Aorta (tissue), 5 donors: ENCODE measurements at regions of chrX and their contacts with region 1.

Region 1: DNA sequence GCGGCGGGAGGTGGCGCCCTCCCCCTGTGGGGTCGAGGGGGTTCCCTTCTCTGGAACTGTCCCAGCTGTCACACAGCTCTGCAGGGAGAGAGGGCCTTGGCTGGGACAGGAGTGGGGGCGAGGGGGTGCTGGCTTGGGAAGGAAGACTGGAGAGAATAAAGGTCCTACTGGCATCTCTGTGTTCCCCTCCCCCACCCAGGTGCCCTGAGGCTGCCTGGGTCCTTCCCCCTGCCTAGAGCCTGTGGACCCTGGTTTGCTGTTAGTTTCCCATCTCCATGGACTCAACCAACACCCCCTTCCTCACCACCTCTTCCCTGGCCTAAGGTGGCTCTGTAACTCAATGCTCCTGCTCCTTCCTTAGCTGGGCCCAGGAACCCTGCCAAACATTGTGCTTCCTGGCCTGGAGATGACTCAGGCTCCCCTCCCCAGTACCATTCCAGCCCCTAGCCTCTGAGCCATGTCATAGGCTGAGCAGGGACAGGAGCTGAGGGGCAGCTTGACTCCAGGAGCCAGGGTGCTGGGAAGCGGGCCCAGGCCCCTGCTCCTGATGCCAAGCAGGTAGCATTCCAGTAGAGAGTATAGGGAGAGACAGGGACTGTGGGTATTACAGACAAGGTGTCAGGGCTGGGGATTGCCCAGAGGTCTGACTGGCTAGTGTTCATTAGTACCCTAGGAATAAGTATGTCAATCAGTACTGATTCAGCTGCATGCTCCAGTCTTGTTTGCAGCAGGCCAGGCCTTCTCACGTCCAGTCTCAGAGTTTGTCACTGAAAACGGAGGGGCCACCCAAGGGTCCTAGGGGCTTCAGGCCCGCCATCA is 100.7 kb downstream of the EFNB1 start:
- DNase-seq: peak in 1 of 2 donors; percentile 62
- ATAC-seq: no peak
- H3K4me3 ChIP-seq: no peak overlapping the region
- H3K27ac ChIP-seq: no peak overlapping the region
- H3K4me1 ChIP-seq: no peaks in the 10 kb centered on the region
- H3K27me3 ChIP-seq: no peaks in the 10 kb centered on the region

Region 2: DNA sequence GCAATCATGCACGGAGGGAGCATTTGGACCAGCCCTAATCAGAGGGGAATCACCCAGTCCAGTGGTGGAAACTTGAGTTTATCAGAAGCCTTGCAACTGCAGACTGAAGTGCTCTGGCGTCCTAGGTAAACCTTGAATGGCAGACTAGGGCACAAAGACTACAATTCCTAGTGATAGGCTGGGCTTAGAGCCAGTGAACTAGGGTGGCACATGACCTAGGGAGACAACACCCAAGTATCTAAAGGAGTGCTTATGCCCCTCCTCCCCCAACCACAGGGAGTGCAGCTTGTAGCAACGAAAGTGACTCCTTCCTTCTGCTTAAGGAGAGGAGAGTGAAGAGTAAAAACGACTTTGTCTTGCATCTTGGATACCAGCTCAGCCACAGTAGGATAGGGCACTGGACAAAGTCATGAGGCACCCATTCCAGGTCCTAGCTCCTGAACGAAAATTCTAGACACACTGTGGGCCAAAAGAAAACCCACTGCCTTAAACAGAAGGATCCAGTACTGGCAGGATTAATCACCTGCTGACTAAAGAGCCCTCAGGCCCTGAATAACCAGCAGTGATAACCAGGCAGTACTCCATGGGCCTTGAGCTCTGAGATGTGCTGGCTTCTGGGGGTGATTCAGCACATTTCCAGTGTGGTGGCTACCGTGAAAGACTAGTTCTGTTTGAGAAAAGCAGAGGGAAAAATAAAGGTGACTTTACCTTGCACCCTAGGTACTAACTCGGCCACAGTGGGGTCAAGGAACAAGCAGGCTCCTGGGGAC is 340.8 kb before region 1 on chrX:
- intact Hi-C with region 1: no loop called
- DNase-seq: no peak
- ATAC-seq: no peak
- H3K4me3 ChIP-seq: no peak overlapping the region
- H3K27ac ChIP-seq: no peak overlapping the region
- H3K4me1 ChIP-seq: no peaks in the 10 kb centered on the region
- H3K27me3 ChIP-seq: peaks cover 0 to 3% of the 10 kb centered on the region in 2 donors

Region 3: GRCh38 chrX:68894513-68895340 is 34.8 kb before region 1 on chrX:
- intact Hi-C with region 1: loop called in 1 of 2 experiments (anchors 5 kb)
- DNase-seq: peak; percentile 83 to 88
- ATAC-seq: peak; percentile 72
- H3K4me3 ChIP-seq: no peak overlapping the region
- H3K27ac ChIP-seq: peak overlapping the region in 1 of 2 donors; percentile 97
- H3K4me1 ChIP-seq: no peaks in the 10 kb centered on the region
- H3K27me3 ChIP-seq: no peaks in the 10 kb centered on the region